HepG2 (cell line): ENCODE measurements at regions of chr18 and their contacts with region 1.

Region 1: DNA sequence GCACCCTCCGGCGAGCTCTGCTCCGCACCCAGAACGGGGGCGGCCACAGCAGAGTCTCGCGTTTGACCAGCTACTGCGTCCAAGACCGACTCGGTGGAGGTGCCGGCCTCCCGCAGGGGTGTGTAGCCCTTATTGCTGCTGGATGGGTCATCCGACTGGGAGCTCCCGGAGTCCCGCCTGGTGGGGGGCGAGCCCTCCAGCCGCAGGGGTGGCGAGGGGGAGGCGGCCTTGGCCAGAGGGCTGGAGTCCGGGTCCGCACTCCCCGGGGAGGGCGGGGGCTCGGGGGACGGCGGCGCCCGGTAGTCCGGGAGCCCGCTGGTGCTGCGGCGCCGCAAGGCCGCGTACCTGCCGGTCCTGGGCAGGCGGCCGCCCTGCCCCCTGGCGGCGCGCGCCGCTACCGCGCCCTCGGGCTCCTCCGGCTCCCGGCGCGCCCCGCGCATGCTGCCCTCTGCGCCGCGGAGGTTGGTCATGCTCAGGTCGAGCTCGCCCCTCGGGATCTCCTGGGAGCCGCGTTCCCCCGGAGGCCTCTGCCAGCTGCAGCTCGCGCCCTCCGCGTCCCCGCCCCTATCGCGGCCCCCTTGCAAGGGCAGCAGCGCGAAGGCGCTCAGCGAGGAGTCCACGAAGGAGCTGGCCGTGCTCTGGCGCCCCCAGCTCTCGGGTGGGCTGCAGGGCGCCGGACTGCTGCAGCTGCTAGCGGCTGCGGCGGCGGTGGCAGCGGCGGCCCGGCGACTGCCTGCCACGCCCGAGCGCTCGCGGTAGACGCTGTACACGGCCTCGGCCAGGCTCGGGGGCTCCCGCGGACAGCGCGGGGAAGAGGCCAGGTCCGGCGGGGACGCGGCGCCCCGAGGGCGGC is 4.8 kb downstream of the TMEM200C start:
- DNase-seq: peak; percentile 11
- ATAC-seq: peak; percentile 97
- H3K4me3 ChIP-seq: peak overlapping the region; percentile 56 to 73 (median 63); a peak in 5 of 6 replicates
- H3K27ac ChIP-seq: no peak overlapping the region
- H3K4me1 ChIP-seq: 0 out of 2 replicates have a peak, but pooled peaks cover 6% of the 10 kb centered on the region
- H3K27me3 ChIP-seq: peaks cover 16 to 62% of the 10 kb centered on the region in 2 experiments
- CTCF ChIP-seq: peak; percentile 57
- EP300 ChIP-seq: no peak
- POLR2A ChIP-seq: no peak
- RAD21 ChIP-seq: peak; percentile 76

Region 2: GRCh38 chr18:5073026-5073944 is 817.3 kb before region 1 on chr18:
- CTCF ChIA-PET with region 1: interaction called, 11 read pairs
- POLR2A ChIA-PET with region 1: no interaction called
- in situ Hi-C with region 1: no loop called
- intact Hi-C with region 1: no loop called
- DNase-seq: peak; percentile 31
- ATAC-seq: peak; percentile 78
- H3K4me3 ChIP-seq: no peak overlapping the region
- H3K27ac ChIP-seq: no peak overlapping the region
- H3K4me1 ChIP-seq: no peaks in the 10 kb centered on the region
- H3K27me3 ChIP-seq: 0 out of 5 replicates have a peak, but pooled peaks cover 0 to 2% of the 10 kb centered on the region in 2 experiments
- CTCF ChIP-seq: peak; percentile 82
- EP300 ChIP-seq: no peak
- POLR2A ChIP-seq: no peak
- RAD21 ChIP-seq: peak; percentile 60

Region 3: DNA sequence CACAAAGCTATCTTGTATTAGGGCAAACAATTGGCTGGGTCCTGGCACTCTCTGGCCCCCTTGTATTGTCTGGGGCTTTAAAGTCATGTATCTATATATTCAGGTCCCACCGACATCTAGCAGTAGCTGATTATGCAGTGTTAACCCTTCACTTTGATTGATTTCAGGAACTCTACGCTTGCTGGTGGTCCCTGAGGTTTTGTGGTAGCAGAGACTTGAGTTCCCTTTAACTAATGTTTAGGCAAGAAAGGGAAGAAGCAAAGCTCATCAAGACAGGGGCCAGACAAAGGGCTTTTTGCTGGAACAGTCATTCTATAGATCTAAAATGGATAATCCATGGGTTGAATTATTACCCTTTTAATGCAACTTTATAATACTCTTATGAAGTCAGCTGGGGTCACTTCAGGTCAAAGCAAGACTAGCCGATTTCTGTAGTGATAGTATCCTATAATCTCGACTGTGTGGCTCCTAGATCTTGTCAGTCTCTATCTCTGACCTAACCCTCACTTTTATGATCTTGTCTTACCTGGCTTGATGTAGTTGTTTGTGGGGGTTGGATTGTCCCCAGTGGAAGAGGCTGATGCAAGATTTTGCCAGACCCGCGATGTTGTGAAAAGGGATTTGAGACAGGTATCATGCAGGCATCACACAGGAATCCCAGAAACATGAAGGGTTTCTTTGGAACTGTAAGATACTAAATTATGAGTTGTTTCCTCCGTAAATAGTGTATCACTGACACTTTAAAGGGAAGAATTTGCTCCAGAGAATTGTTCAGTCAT is 251.2 kb before region 1 on chr18:
- CTCF ChIA-PET with region 1: no interaction called
- POLR2A ChIA-PET with region 1: no interaction called
- in situ Hi-C with region 1: no loop called
- intact Hi-C with region 1: no loop called
- DNase-seq: no peak
- ATAC-seq: no peak
- H3K4me3 ChIP-seq: no peak overlapping the region
- H3K27ac ChIP-seq: no peak overlapping the region
- H3K4me1 ChIP-seq: no peaks in the 10 kb centered on the region
- H3K27me3 ChIP-seq: no peaks in the 10 kb centered on the region; a peak in 1 of 5 replicates
- CTCF ChIP-seq: no peak
- EP300 ChIP-seq: no peak
- POLR2A ChIP-seq: no peak
- RAD21 ChIP-seq: no peak

Region 4: DNA sequence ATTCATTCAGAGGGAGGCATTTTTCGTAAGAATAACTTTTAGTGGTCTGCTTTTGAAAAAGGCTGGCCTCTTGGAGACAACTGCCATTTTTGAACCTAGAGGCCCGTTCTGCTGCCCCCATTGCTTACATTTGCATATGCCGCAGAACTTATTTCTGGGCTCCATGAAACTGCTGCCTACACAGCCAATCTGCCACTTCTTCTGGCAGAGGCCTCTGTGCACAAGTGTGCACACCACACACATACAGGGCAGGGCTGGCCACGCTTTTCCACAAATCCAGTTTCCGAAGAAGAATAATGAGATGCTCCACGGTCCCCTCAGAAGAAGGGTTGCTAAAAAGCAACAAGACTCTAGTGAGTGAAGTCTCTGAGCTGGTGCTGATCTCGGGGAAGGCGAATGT is 51.5 kb before region 1 on chr18:
- CTCF ChIA-PET with region 1: no interaction called
- POLR2A ChIA-PET with region 1: no interaction called
- in situ Hi-C with region 1: no loop called
- intact Hi-C with region 1: no loop called
- DNase-seq: no peak
- ATAC-seq: no peak
- H3K4me3 ChIP-seq: no peak overlapping the region
- H3K27ac ChIP-seq: no peak overlapping the region
- H3K4me1 ChIP-seq: no peaks in the 10 kb centered on the region
- H3K27me3 ChIP-seq: no peaks in the 10 kb centered on the region
- CTCF ChIP-seq: no peak
- EP300 ChIP-seq: no peak
- POLR2A ChIP-seq: no peak
- RAD21 ChIP-seq: no peak

Region 5: GRCh38 chr18:5951515-5952091 is 61.0 kb after region 1 on chr18:
- CTCF ChIA-PET with region 1: no interaction called
- POLR2A ChIA-PET with region 1: no interaction called
- in situ Hi-C with region 1: no loop called
- intact Hi-C with region 1: loop called (anchors 10 kb)
- DNase-seq: no peak
- ATAC-seq: peak; percentile 78
- H3K4me3 ChIP-seq: no peak overlapping the region
- H3K27ac ChIP-seq: no peak overlapping the region
- H3K4me1 ChIP-seq: no peaks in the 10 kb centered on the region
- H3K27me3 ChIP-seq: no peaks in the 10 kb centered on the region
- CTCF ChIP-seq: peak; percentile 41; the same call in 1 of the 2 replicates
- EP300 ChIP-seq: no peak
- POLR2A ChIP-seq: no peak
- RAD21 ChIP-seq: no peak

Region 6: DNA sequence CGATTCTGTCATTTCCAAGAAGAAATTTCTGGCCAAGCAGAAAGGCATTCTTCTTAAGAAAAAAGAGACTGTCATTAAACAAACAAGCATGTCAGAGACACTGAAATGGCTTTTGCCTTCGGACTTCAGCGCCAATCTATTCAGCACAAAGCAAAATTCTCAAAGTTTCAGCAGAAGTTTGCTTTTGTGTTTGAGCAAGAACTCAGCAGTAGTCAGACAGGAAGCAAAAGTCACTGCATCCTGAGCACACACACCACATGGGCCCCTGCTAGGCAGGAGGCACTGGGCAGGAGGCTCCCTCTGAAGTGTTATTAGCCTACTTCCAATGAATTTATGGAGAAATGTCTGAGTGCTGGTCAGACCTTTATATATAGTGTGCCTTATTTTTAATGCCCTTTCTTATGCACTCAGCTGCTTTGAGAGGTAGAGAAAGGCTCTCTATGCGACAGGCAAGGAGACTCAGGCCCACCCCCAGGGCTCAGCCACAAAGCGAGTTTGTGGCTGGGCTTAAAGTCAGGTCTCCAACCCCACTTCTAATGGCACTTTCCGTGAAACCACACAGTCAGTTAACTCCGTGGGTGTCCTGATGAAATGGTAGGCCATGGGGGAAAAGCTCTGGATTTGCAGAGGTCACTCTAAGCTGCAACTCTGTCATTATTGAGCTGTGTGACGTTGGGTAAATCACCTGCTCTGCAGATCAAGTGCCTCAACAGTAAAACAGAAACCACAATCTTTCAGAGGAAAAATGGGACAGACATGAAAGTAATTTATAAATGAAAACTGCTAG is 165.8 kb after region 1 on chr18:
- CTCF ChIA-PET with region 1: no interaction called
- POLR2A ChIA-PET with region 1: no interaction called
- in situ Hi-C with region 1: no loop called
- intact Hi-C with region 1: loop called (anchors 10 kb)
- DNase-seq: peak; percentile 57
- ATAC-seq: peak; percentile 96
- H3K4me3 ChIP-seq: no peak overlapping the region
- H3K27ac ChIP-seq: peak overlapping the region; percentile 50
- H3K4me1 ChIP-seq: peaks cover 47% of the 10 kb centered on the region
- H3K27me3 ChIP-seq: no peaks in the 10 kb centered on the region
- CTCF ChIP-seq: no peak
- EP300 ChIP-seq: no peak
- POLR2A ChIP-seq: no peak
- RAD21 ChIP-seq: no peak

Region 7: DNA sequence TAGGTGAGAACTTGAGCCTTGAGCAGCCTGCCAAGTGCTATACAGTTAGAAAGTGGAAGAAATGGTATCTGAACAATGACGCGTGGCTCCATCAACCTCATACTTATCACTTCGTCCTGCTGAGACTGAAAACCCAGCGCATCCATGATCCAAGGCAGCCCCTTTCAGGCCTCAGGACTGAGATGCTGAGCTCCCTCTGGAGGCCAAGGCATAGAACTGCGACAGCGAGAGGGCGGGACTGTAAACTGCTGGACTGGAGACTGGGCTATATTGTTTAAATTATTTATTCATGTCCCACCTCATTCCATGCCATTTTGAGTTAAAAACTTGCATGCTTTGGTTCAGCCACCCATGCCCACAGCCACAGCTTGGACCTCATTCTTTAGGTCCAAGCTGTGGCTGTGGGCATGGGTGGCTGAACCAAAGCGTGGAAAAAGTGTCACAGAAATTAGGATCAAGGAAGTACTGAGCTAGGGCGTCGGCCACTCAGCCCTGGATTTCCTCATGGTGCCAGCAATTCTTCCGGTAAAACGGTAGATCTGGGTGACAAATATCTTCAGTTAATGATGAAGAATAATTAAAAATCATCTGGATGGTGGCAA is 328.7 kb after region 1 on chr18:
- CTCF ChIA-PET with region 1: no interaction called
- POLR2A ChIA-PET with region 1: no interaction called
- in situ Hi-C with region 1: loop called (anchors 10 kb)
- intact Hi-C with region 1: no loop called
- DNase-seq: peak; percentile 24
- ATAC-seq: peak; percentile 80
- H3K4me3 ChIP-seq: no peak overlapping the region
- H3K27ac ChIP-seq: no peak overlapping the region
- H3K4me1 ChIP-seq: no peaks in the 10 kb centered on the region
- H3K27me3 ChIP-seq: no peaks in the 10 kb centered on the region
- CTCF ChIP-seq: peak; percentile 77
- EP300 ChIP-seq: no peak
- POLR2A ChIP-seq: no peak
- RAD21 ChIP-seq: no peak

Region 8: GRCh38 chr18:6885992-6886796 is 995.6 kb after region 1 on chr18:
- CTCF ChIA-PET with region 1: no interaction called
- POLR2A ChIA-PET with region 1: no interaction called
- in situ Hi-C with region 1: loop called (anchors 25 kb)
- intact Hi-C with region 1: no loop called
- DNase-seq: peak; percentile 35
- ATAC-seq: peak; percentile 68
- H3K4me3 ChIP-seq: no peak overlapping the region
- H3K27ac ChIP-seq: no peak overlapping the region
- H3K4me1 ChIP-seq: no peaks in the 10 kb centered on the region
- H3K27me3 ChIP-seq: peaks cover 0 to 18% of the 10 kb centered on the region in 2 experiments; a peak in 3 of 5 replicates
- CTCF ChIP-seq: peak; percentile 77
- EP300 ChIP-seq: no peak
- POLR2A ChIP-seq: no peak
- RAD21 ChIP-seq: peak; percentile 69